Naive thymus-derived CD4-positive, alpha-beta T cell (primary cell): ENCODE measurements at regions of chr19 and their contacts with region 1.

Region 1: GRCh38 chr19:7149956-7150705 is 80.6 kb downstream of the ZNF557 start:
- DNase-seq: no peak
- ATAC-seq: no peak
- H3K4me3 ChIP-seq: no peak overlapping the region
- H3K4me3 Mint-ChIP-seq: no peak overlapping the region
- H3K27ac ChIP-seq: no peak overlapping the region
- H3K27ac Mint-ChIP-seq: peak overlapping the region in 1 of 9 donors; percentile 77
- H3K4me1 ChIP-seq: no peaks in the 10 kb centered on the region
- H3K4me1 Mint-ChIP-seq: no peaks in the 10 kb centered on the region
- H3K27me3 ChIP-seq: no peaks in the 10 kb centered on the region
- H3K27me3 Mint-ChIP-seq: no peaks in the 10 kb centered on the region

Region 2: GRCh38 chr19:7257148-7258034 is 107.3 kb after region 1 on chr19:
- CTCF ChIA-PET with region 1: no interaction called
- POLR2A ChIA-PET with region 1: no interaction called
- intact Hi-C with region 1: no loop called
- DNase-seq: no peak
- ATAC-seq: no peak
- H3K4me3 ChIP-seq: no peak overlapping the region
- H3K4me3 Mint-ChIP-seq: no peak overlapping the region
- H3K27ac ChIP-seq: no peak overlapping the region
- H3K27ac Mint-ChIP-seq: peak overlapping the region in 1 of 9 donors; percentile 36
- H3K4me1 ChIP-seq: no peaks in the 10 kb centered on the region
- H3K4me1 Mint-ChIP-seq: no peaks in the 10 kb centered on the region
- H3K27me3 ChIP-seq: no peaks in the 10 kb centered on the region
- H3K27me3 Mint-ChIP-seq: peaks cover 0 to 4% (median 0%) of the 10 kb centered on the region in 5 donors

Region 3: GRCh38 chr19:7293795-7294570 is 143.9 kb after region 1 on chr19 and contains the start of gene INSR:
- CTCF ChIA-PET with region 1: no interaction called
- POLR2A ChIA-PET with region 1: no interaction called
- intact Hi-C with region 1: loop called in 1 of 2 experiments (anchors 1 kb)
- DNase-seq: peak in 8 of 9 donors; percentile 18 to 73 (median 30)
- ATAC-seq: peak; percentile 96
- H3K4me3 ChIP-seq: peak within 1 kb of the TSS; percentile 47
- H3K4me3 Mint-ChIP-seq: peak within 1 kb of the TSS; percentile 64 to 89 (median 78)
- H3K27ac ChIP-seq: no peak within 1 kb of the TSS
- H3K27ac Mint-ChIP-seq: peak within 1 kb of the TSS in 1 of 9 donors; percentile 53
- H3K4me1 ChIP-seq: peaks cover 0 to 7% of the 10 kb centered on the region in 2 donors
- H3K4me1 Mint-ChIP-seq: peaks cover 0 to 22% (median 14%) of the 10 kb centered on the region in 7 donors
- H3K27me3 ChIP-seq: no peaks in the 10 kb centered on the region
- H3K27me3 Mint-ChIP-seq: peaks cover 14 to 44% (median 29%) of the 10 kb centered on the region in 5 donors
- total RNA-seq, gene INSR: 0.89 to 9.9 (median 3.9) TPM

Region 4: DNA sequence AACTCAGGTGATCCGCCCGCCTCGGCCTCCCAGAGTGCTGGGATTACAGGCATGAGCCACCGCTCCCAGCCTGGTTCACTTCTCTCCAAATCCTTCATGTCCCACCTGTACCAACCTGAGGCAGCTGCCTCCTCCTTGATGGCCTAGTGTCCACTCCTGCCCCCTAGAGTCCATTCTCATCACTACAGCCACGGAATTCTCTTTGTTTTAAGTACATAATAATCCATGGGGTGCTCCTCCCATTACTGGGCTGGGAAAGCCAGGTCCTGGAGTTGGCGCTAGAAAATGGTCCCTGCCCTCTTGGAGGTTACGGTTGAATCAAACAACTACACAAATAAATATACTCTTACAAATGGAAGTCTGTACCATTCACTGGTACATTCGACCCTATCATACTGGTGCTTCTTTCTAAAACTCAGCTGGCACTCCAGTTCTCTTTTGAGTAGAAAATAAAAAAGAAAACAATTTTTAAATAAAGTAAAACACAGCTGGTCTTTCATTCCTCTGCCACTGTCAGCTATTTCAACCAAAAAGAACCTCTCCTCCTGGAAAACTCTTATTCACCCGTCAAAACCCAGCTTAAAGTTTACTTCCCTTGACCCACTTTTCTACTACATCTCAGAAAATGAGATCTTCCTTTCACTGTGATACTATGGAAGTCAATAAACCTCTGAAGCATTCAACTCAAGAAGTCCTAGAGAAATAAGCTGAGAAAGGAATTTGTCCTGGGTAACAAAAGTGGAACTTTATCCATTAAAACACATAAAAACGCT is 176.2 kb after region 1 on chr19:
- CTCF ChIA-PET with region 1: interaction called, 4 read pairs
- POLR2A ChIA-PET with region 1: interaction called, 3 read pairs
- intact Hi-C with region 1: loop called in 1 of 2 experiments (anchors 1 kb)
- DNase-seq: peak in 3 of 9 donors; percentile 7 to 40 (median 33)
- ATAC-seq: no peak
- H3K4me3 ChIP-seq: no peak overlapping the region
- H3K4me3 Mint-ChIP-seq: no peak overlapping the region
- H3K27ac ChIP-seq: no peak overlapping the region
- H3K27ac Mint-ChIP-seq: no peak overlapping the region
- H3K4me1 ChIP-seq: no peaks in the 10 kb centered on the region
- H3K4me1 Mint-ChIP-seq: no peaks in the 10 kb centered on the region
- H3K27me3 ChIP-seq: no peaks in the 10 kb centered on the region
- H3K27me3 Mint-ChIP-seq: no peaks in the 10 kb centered on the region

Region 5: GRCh38 chr19:7340959-7341837 is 191.1 kb after region 1 on chr19:
- CTCF ChIA-PET with region 1: interaction called, 24 read pairs
- POLR2A ChIA-PET with region 1: interaction called, 8 read pairs
- intact Hi-C with region 1: loop called (anchors 1 kb)
- DNase-seq: peak; percentile 65 to 91 (median 77)
- ATAC-seq: peak; percentile 60
- H3K4me3 ChIP-seq: no peak overlapping the region
- H3K4me3 Mint-ChIP-seq: peak overlapping the region in 7 of 10 donors; percentile 11 to 74 (median 39)
- H3K27ac ChIP-seq: no peak overlapping the region
- H3K27ac Mint-ChIP-seq: peak overlapping the region; percentile 14 to 95 (median 86)
- H3K4me1 ChIP-seq: peaks cover 37 to 39% of the 10 kb centered on the region in 2 donors
- H3K4me1 Mint-ChIP-seq: peaks cover 29 to 64% (median 59%) of the 10 kb centered on the region in 7 donors
- H3K27me3 ChIP-seq: no peaks in the 10 kb centered on the region
- H3K27me3 Mint-ChIP-seq: peaks cover 0 to 12% (median 0%) of the 10 kb centered on the region in 5 donors

Region 6: DNA sequence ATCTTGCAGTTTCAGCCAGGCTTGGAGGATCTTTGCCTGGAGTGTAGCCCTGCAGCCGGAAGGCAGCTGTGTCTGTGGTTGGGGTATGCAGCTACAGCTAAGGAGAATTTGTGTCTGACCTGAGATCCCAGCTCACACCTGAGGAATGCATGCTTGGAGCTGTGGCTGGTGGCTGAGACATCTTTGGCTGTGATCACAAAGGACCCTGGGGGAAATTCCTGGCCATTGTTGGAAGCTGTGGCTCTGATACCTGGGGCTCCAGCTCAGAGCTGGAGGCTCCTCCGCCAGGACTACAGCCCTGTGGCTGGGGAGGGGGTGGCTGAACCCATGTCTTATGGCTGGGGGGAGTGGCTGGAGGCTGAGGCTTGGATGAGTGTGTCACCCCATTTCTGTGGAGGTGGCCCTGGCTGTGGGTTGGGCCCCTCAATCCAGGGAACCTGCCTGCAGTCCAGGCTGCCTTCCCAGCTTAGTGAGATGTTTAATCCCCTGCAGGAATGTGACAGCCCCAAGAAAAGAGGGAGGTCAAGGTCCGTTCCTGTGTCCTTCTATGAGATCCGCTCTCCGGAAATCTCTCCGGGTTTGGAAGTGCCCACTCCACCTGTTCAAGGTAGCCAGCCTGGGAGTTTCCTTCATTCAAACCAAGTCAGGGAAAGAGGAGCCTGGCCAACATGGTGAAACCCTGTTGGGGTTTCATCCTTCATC is 226.2 kb after region 1 on chr19:
- CTCF ChIA-PET with region 1: interaction called, 3 read pairs
- POLR2A ChIA-PET with region 1: no interaction called
- intact Hi-C with region 1: loop called (anchors 1 kb)
- DNase-seq: no peak
- ATAC-seq: no peak
- H3K4me3 ChIP-seq: no peak overlapping the region
- H3K4me3 Mint-ChIP-seq: no peak overlapping the region
- H3K27ac ChIP-seq: no peak overlapping the region
- H3K27ac Mint-ChIP-seq: peak overlapping the region in 3 of 9 donors; percentile 55 to 76 (median 69)
- H3K4me1 ChIP-seq: no peaks in the 10 kb centered on the region
- H3K4me1 Mint-ChIP-seq: peaks cover 0 to 33% (median 16%) of the 10 kb centered on the region in 7 donors
- H3K27me3 ChIP-seq: no peaks in the 10 kb centered on the region
- H3K27me3 Mint-ChIP-seq: no peaks in the 10 kb centered on the region